Activated T-helper 1 cell treated with anti-CD3 and anti-CD28 coated beads, Interleukin-12 subunit alpha, Interleukin-12 subunit beta, Interleukin-2, Interleukin-4 antibody, amounts not matched to agents 30 ng/mL and 10 ng/mL and 1 ng/mL, durations not matched to agents 14 hours and 24 hours and 36 hours (primary cell): ENCODE measurements at regions of chr10 and their contacts with region 1.

Region 1: DNA sequence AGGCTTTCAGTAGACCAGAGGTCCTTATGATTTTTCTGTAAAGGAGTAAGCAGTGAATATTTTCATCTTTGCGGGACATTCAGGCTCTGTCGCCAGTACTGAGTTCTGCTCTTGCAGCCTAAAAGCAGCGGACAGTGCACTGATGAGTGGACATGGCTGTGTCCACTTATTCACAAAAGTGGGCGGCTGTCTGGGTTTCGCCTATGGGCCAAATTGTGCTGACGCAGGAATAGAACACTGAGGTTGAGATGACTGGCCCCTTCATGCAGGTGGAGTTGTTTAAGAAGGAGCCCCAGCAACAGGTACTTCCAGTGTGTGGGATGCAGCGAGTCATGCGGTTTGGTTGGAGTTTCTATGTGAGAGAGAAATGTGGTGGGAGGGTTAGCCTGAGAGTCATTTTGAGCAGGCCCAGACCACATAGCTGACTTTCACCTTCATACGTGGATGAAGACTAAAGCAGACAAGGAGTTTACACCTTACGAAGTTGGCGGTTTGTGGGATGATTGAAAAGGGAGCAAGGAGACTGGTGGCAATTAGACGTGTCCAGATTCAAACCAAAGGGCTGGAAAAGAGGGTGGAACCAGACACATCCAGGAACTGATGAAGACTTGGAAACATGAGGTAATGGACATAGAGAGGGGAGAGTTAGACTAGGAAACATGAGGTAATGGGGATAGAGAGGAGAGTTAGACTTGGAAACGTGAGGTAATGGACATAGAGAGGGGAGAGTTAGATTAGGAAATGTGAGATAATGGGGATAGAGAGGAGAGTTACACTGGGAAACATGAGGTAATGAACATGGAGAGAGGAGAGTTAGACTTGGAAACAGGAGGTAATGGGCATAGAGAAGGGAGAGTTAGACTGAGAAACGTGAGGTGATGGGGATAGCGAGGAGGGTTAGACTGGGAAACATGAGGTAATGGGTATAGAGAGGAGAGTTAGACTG is 38.2 kb downstream of the WDR37 start:
- DNase-seq: peak; percentile 28
- H3K4me3 Mint-ChIP-seq: no peak overlapping the region
- H3K27ac Mint-ChIP-seq: no peak overlapping the region
- H3K4me1 Mint-ChIP-seq: peaks cover 5% of the 10 kb centered on the region
- H3K27me3 Mint-ChIP-seq: peaks cover 3% of the 10 kb centered on the region

Region 2: DNA sequence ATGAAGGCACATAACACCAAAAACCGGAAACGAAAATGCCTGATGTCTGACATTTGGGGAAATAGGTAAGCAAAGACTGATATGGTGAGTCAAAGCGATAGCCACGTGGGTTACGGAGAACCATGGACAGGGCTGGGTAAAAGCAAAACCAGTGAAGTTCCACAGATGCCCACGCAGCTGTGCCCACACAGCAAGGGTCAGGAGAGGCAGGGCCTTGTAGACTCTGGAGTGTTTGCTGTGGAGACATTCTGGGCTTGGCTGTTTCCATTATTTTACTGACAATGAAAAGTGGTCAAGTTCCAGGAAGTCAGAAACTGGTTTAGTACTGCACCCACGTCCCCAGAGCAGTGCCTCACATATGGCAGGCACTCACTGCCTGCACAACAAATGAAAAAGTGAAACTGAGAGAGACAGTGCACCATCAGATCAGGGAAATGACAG is 810.4 kb before region 1 on chr10:
- intact Hi-C with region 1: loop called (anchors 5 kb)
- DNase-seq: peak; percentile 16
- H3K4me3 Mint-ChIP-seq: peak overlapping the region; percentile 41
- H3K27ac Mint-ChIP-seq: peak overlapping the region; percentile 78
- H3K4me1 Mint-ChIP-seq: peaks cover 29% of the 10 kb centered on the region
- H3K27me3 Mint-ChIP-seq: no peaks in the 10 kb centered on the region

Region 3: DNA sequence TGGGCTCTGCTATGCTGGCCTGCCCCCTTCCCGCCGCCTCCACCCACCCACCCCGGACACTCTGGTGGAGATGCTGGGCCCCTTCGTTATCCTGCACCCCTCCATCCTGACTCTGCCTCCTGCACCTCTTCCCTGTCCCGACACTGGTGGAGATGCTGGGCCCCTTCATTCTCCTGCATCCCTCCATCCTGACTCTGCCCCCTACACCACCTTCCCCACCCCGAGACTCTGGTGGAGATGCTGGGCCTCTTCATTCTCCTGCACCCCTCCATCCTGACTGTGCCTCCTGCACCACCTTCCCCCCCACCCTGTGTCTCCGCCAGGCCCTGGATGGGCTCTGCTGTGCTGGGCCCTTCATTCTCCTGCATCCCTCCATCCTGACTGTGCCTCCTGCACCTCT is 83.7 kb before region 1 on chr10:
- intact Hi-C with region 1: loop called (anchors 1 kb)
- DNase-seq: no peak
- H3K4me3 Mint-ChIP-seq: peak overlapping the region; percentile 61
- H3K27ac Mint-ChIP-seq: peak overlapping the region; percentile 97
- H3K4me1 Mint-ChIP-seq: peaks cover 44% of the 10 kb centered on the region
- H3K27me3 Mint-ChIP-seq: no peaks in the 10 kb centered on the region

Region 4: GRCh38 chr10:1056326-1057105 is 37.9 kb before region 1 on chr10 and contains the start of gene WDR37:
- intact Hi-C with region 1: loop called (anchors 1 kb)
- DNase-seq: peak; percentile 84
- H3K4me3 Mint-ChIP-seq: peak within 1 kb of the TSS; percentile 97
- H3K27ac Mint-ChIP-seq: peak within 1 kb of the TSS; percentile 91
- H3K4me1 Mint-ChIP-seq: peaks cover 78% of the 10 kb centered on the region
- H3K27me3 Mint-ChIP-seq: no peaks in the 10 kb centered on the region
- total RNA-seq, gene WDR37: 19.9 and 21.1 TPM in 2 replicates

Region 5: GRCh38 chr10:1068380-1069361 is 25.7 kb before region 1 on chr10:
- intact Hi-C with region 1: loop called (anchors 2 kb)
- DNase-seq: no peak
- H3K4me3 Mint-ChIP-seq: no peak overlapping the region
- H3K27ac Mint-ChIP-seq: peak overlapping the region; percentile 33
- H3K4me1 Mint-ChIP-seq: peaks cover 50% of the 10 kb centered on the region
- H3K27me3 Mint-ChIP-seq: no peaks in the 10 kb centered on the region